Activated T-helper 2 cell treated with anti-CD3 and anti-CD28 coated beads, Interferon-gamma antibody, Interleukin-2, Interleukin-4, amounts not matched to agents 10 μg/mL and 5 μg/mL and 100 μg/mL, durations not matched to agents 14 hours and 24 hours and 36 hours (primary cell): ENCODE measurements at regions of chr21 and their contacts with region 1.

Region 1: GRCh38 chr21:44873356-44874239 is at the start of gene PTTG1IP:
- DNase-seq: peak; percentile 100
- H3K4me3 Mint-ChIP-seq: peak within 1 kb of the TSS; percentile 87
- H3K27ac Mint-ChIP-seq: peak within 1 kb of the TSS; percentile 89
- H3K4me1 Mint-ChIP-seq: peaks cover 48% of the 10 kb centered on the region
- H3K27me3 Mint-ChIP-seq: no peaks in the 10 kb centered on the region
- total RNA-seq, gene PTTG1IP: 48.1 and 48.3 TPM in 2 replicates

Region 2: GRCh38 chr21:44801468-44802395 is 71.9 kb before region 1 on chr21 and contains the start of gene UBE2G2:
- intact Hi-C with region 1: loop called (anchors 1 kb)
- DNase-seq: peak; percentile 86
- H3K4me3 Mint-ChIP-seq: peak within 1 kb of the TSS; percentile 98
- H3K27ac Mint-ChIP-seq: peak within 1 kb of the TSS; percentile 85
- H3K4me1 Mint-ChIP-seq: peaks cover 43% of the 10 kb centered on the region
- H3K27me3 Mint-ChIP-seq: no peaks in the 10 kb centered on the region
- total RNA-seq, gene UBE2G2: 118 and 119 TPM in 2 replicates

Region 3: DNA sequence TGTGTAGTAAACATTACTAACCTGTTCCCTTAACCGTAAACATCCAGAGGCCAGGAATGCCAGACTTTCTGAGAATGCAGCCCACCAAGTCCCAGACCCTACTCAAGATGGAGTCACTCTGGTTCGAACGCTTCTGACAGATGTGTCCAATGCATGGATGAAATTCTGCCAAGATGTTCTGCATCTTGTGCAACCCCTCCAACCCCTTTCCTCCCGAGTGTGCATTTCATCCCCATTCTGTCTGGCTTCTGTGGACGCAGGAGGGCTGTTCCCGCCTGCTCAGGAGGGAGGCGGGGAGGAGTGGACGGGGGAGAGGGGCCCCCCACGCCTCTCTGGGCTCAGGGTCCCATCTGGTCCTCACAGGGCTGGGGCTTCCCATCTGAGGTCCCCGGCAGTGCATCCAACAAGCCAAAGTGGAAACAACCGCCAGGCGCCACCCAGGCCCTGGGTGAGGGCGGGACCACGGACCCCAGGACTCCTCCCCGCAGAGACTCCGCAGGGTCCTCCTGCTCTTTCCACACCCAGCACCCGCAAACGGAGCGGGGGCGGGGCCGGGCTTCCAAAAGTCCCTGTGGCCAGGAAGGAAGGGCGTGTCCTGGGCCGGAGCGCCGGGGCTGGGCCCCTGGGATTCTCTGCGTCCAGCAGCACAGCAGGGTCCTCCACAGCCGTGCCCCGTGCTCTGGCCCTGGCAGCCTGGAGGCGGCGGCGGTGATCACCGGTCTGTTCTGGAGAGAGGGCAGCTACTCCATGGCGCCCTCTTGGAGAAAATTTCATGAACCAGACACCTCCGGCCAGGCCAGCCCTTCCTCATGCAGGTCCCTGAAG is 28.0 kb before region 1 on chr21:
- intact Hi-C with region 1: loop called (anchors 2 kb)
- DNase-seq: peak; percentile 48
- H3K4me3 Mint-ChIP-seq: peak overlapping the region; percentile 45
- H3K27ac Mint-ChIP-seq: peak overlapping the region; percentile 33
- H3K4me1 Mint-ChIP-seq: peaks cover 9% of the 10 kb centered on the region
- H3K27me3 Mint-ChIP-seq: peaks cover 9% of the 10 kb centered on the region

Region 4: GRCh38 chr21:44927587-44928461 is 54.2 kb after region 1 on chr21:
- intact Hi-C with region 1: loop called (anchors 2 kb)
- DNase-seq: peak; percentile 65
- H3K4me3 Mint-ChIP-seq: peak overlapping the region; percentile 74
- H3K27ac Mint-ChIP-seq: peak overlapping the region; percentile 96
- H3K4me1 Mint-ChIP-seq: peaks cover 70% of the 10 kb centered on the region
- H3K27me3 Mint-ChIP-seq: no peaks in the 10 kb centered on the region

Region 5: DNA sequence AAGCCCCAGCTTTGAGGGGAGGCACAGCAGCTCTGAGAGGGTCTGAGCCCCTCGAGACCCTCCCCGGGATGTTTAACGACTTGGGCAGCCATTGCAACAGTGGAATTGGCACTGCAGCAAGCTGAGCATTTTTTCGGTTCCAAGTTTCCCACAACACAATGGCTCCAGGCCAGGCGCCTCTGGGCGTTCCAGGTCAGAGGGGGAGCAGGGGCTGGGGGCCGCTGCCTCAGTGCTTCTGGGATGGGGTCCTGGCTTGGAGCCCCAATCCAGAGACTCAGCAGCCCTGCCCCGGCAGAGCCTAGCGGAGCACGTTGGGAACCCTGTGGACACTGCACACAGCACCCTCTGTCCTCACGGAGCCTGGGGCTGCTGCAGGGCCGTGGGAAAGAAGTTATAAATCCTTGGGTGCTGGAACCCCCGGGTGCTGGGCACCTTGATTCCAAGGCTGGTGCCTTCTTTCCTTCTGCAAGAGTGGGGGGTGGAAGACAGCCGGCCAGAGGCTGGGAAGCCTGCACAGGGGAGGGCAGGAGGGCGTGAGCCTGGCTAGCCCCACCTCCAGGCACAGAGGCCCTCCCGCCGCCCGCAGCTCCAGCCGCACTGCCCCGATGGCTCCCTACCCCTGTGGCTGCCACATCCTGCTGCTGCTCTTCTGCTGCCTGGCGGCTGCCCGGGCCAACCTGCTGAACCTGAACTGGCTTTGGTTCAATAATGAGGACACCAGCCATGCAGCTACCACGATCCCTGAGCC is 581.5 kb after region 1 on chr21:
- intact Hi-C with region 1: no loop called
- DNase-seq: no peak
- H3K4me3 Mint-ChIP-seq: no peak overlapping the region
- H3K27ac Mint-ChIP-seq: no peak overlapping the region
- H3K4me1 Mint-ChIP-seq: no peaks in the 10 kb centered on the region
- H3K27me3 Mint-ChIP-seq: no peaks in the 10 kb centered on the region